PC-9 (cell line): ENCODE measurements at regions of chr12 and their contacts with region 1.

Region 1: GRCh38 chr12:116202940-116203339 is 74.6 kb downstream of the MED13L start:
- DNase-seq: no peak
- H3K4me3 ChIP-seq: no peak overlapping the region
- H3K27ac ChIP-seq: no peak overlapping the region
- H3K4me1 ChIP-seq: no peaks in the 10 kb centered on the region
- H3K27me3 ChIP-seq: no peaks in the 10 kb centered on the region
- CTCF ChIP-seq: no peak

Region 2: GRCh38 chr12:116222358-116222757 is 19.4 kb after region 1 on chr12:
- CTCF ChIA-PET with region 1: no interaction called
- POLR2A ChIA-PET with region 1: no interaction called
- intact Hi-C with region 1: no loop called
- DNase-seq: peak in 1 of 2 experiments; percentile 41
- H3K4me3 ChIP-seq: no peak overlapping the region
- H3K27ac ChIP-seq: no peak overlapping the region
- H3K4me1 ChIP-seq: no peaks in the 10 kb centered on the region
- H3K27me3 ChIP-seq: no peaks in the 10 kb centered on the region
- CTCF ChIP-seq: no peak

Region 3: GRCh38 chr12:117857632-117858612 is 1655.0 kb after region 1 on chr12:
- CTCF ChIA-PET with region 1: no interaction called
- POLR2A ChIA-PET with region 1: interaction called, 13 read pairs
- intact Hi-C with region 1: no loop called
- DNase-seq: peak; percentile 34 to 50
- H3K4me3 ChIP-seq: no peak overlapping the region
- H3K27ac ChIP-seq: no peak overlapping the region
- H3K4me1 ChIP-seq: peaks cover 15% of the 10 kb centered on the region
- H3K27me3 ChIP-seq: no peaks in the 10 kb centered on the region
- CTCF ChIP-seq: peak; percentile 76